K562 (cell line): ENCODE measurements at regions of chr2 and their contacts with region 1.

Region 1: DNA sequence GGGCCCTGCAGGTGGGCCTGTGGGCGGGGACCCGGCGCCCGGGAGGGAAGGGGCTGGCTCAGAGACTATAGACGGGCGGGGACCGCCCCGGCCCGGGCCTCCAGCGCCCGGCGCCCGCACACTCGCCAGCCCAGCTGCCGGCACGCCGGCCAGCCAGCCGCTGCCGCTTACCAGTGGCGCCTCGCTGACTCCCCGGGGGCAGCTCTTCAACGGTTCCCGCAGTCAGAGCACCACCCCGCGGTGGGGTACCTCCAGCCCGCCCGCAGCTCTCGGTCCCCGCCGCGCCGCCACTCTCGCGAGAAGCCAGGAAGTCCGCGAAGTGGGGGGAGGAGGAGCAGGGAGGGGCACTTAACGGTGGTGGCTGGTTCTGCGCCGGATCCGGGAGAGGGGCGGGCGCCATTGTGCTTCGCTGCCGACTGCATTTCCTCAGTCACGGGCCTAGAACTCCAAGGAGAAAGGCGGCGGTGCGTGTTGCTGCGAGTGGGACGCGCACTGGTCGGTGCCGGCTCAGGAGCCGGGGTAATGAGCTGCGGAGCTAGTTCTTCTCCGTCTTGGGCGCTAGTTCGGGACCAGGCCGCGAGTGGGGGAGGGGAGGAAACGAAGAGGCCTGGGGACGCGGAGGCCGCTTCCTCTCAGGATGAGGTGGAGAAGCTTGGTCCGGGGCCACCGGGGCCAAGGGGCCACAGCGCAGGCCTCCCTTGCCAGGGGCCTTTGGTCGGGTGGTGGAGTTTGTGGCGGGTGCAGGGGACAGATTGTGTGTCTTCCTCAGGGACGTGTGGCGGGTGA is at the start of gene MARCHF7:
- DNase-seq: peak; percentile 97
- ATAC-seq: peak; percentile 94
- H3K4me3 ChIP-seq: peak within 1 kb of the TSS; percentile 88
- H3K27ac ChIP-seq: peak within 1 kb of the TSS; percentile 99
- H3K4me1 ChIP-seq: peaks cover 11 to 17% of the 10 kb centered on the region in 2 experiments; a peak in 4 of 5 replicates
- H3K27me3 ChIP-seq: no peaks in the 10 kb centered on the region; a peak in 1 of 5 replicates
- CTCF ChIP-seq: peak; percentile 78 to 89 (median 86)
- EP300 ChIP-seq: peak; percentile 5; the same call in 1 of the 2 replicates
- POLR2A ChIP-seq: peak; percentile 99
- RAD21 ChIP-seq: peak; percentile 88 to 96
- polyA plus RNA-seq, gene MARCHF7: 86.7 to 106 TPM

Region 2: DNA sequence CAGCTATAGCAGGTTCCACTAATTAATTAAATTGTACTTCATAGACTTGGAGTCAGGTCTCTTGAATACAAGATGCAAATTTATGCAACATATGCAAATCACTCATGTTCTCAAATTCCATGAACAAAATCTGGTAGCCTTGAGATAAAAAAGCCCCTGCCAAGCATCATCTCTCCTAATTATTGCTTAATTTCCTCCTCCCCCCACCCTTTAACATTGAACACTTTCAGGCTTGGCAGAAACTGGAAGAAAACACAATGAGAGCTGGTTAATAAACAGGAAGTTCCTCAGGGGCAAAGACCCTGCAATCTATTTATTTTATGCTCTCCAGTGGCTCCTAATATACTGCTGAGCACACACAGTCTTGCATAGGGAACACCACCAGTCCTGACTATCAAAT is 1800.6 kb before region 1 on chr2:
- CTCF ChIA-PET with region 1: no interaction called
- POLR2A ChIA-PET with region 1: no interaction called
- in situ Hi-C with region 1: no loop called
- intact Hi-C with region 1: no loop called
- DNase-seq: no peak
- ATAC-seq: no peak
- H3K4me3 ChIP-seq: no peak overlapping the region
- H3K27ac ChIP-seq: no peak overlapping the region
- H3K4me1 ChIP-seq: peaks cover 0 to 15% of the 10 kb centered on the region in 2 experiments; a peak in 3 of 5 replicates
- H3K27me3 ChIP-seq: no peaks in the 10 kb centered on the region
- CTCF ChIP-seq: no peak
- EP300 ChIP-seq: no peak
- POLR2A ChIP-seq: no peak
- RAD21 ChIP-seq: no peak

Region 3: DNA sequence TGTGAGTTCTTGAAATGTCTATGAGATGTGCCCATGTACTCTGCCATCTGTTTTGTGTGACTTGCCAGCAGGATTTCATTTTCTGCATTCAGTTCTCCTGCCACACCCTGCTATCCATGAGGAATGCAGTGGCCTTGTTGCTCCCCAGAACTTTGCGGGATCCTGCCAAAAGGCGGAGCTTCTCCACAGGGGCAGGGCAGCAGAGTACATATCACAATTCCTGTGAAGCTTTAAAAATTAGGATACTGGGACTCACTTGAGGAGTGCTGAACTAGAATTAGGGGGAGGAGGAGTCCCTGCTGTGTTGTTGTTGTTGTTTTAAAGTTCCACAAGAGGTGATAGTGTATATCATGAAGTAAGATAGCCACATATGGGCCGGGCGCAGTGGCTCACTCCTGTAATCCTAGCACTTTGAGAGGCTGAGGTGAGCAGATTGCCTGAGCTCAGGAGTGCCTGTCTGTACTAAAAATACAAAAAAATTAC is 667.5 kb before region 1 on chr2:
- CTCF ChIA-PET with region 1: no interaction called
- POLR2A ChIA-PET with region 1: no interaction called
- in situ Hi-C with region 1: no loop called
- intact Hi-C with region 1: no loop called
- DNase-seq: no peak
- ATAC-seq: no peak
- H3K4me3 ChIP-seq: no peak overlapping the region
- H3K27ac ChIP-seq: no peak overlapping the region
- H3K4me1 ChIP-seq: no peaks in the 10 kb centered on the region
- H3K27me3 ChIP-seq: peaks cover 18 to 47% of the 10 kb centered on the region in 2 experiments; a peak in 4 of 5 replicates
- CTCF ChIP-seq: no peak
- EP300 ChIP-seq: no peak
- POLR2A ChIP-seq: no peak
- RAD21 ChIP-seq: no peak

Region 4: DNA sequence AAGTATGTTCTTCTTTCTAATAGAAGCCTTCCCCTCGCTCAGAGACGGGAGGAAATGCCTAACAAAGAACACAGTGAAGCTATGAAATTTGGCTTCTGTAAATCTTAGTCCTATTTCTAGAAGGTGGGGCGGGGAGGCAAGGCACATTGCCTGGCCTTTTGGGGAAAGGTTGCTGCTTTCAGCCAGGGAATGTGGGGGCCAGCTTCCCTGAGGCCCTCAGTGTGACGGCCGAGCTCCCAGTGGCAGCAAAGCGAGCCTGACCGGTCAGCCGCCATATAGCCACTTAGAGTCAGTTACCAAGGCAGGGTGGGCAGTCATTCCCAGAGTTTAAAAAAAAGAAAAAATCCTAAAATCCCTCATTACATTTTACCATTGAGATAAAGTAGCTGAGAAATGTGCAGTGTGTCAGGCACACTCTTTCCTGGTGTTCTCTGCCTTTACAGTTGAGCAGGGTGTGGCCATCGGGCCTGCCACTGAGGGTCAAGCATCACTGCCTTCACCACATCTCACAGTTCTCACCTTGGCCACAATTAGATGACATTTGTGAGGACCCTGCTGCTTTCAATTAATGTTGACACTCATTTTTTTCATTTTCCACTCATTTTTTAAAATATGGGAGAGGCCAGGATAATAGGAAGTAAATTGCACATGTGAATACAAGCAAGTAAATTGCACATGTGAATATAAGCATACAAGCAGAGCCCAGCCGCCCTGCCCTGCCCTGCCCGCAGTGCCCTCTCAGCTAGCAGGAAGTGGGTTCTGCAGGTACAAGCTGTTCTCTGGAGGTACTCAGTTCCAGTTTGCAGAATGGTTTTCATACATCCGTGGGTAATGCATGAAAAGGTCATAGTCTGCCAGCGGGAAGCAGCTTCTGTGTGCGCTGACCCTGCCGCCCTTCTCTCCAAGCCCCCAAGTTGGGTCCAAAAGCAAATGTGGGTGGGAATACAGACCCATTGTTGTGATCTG is 502.7 kb before region 1 on chr2:
- CTCF ChIA-PET with region 1: no interaction called
- POLR2A ChIA-PET with region 1: no interaction called
- in situ Hi-C with region 1: no loop called
- intact Hi-C with region 1: loop called (anchors 2 kb)
- DNase-seq: no peak
- ATAC-seq: no peak
- H3K4me3 ChIP-seq: no peak overlapping the region
- H3K27ac ChIP-seq: no peak overlapping the region
- H3K4me1 ChIP-seq: no peaks in the 10 kb centered on the region
- H3K27me3 ChIP-seq: peaks cover 34 to 60% of the 10 kb centered on the region in 2 experiments
- CTCF ChIP-seq: no peak
- EP300 ChIP-seq: no peak
- POLR2A ChIP-seq: no peak
- RAD21 ChIP-seq: no peak

Region 5: GRCh38 chr2:159445307-159445706 is 267.0 kb before region 1 on chr2:
- CTCF ChIA-PET with region 1: no interaction called
- POLR2A ChIA-PET with region 1: interaction called, 3 read pairs
- in situ Hi-C with region 1: no loop called
- intact Hi-C with region 1: loop called (anchors 5 kb)
- DNase-seq: no peak
- ATAC-seq: no peak
- H3K4me3 ChIP-seq: no peak overlapping the region
- H3K27ac ChIP-seq: no peak overlapping the region
- H3K4me1 ChIP-seq: peaks cover 0 to 5% of the 10 kb centered on the region in 2 experiments; a peak in 1 of 5 replicates
- H3K27me3 ChIP-seq: no peaks in the 10 kb centered on the region
- CTCF ChIP-seq: no peak
- EP300 ChIP-seq: no peak
- POLR2A ChIP-seq: no peak
- RAD21 ChIP-seq: no peak

Region 6: DNA sequence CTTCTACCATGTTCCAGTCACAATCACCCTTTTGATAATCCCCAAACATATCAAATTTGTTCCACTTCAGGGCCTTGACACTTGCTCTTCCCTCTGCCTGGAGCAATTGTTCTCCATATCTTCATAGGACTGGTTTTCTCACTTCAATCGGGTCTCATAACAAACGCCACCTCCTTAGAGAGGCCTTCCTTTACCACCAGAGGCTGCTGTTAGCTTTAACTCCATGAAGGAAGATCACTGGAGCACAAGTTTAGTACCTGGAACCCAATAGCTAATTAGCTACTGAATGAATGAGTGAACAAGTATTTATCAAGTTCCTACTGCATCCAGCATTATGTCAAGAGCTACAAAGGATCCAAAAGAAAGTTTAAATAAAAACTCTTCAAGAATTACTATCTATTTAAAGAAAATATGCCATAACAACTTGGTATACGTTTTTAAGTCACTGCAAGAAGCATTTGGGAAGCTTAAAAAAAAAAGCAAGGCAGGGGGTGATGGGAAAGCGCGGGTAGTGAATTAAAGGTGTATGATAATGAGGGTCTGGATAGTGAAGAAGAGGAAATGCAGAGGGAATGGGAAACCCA is 154.8 kb before region 1 on chr2:
- CTCF ChIA-PET with region 1: interaction called, 5 read pairs
- POLR2A ChIA-PET with region 1: no interaction called
- in situ Hi-C with region 1: no loop called
- intact Hi-C with region 1: loop called (anchors 1 kb)
- DNase-seq: peak in 1 of 4 experiments; percentile 39
- ATAC-seq: peak; percentile 85
- H3K4me3 ChIP-seq: no peak overlapping the region
- H3K27ac ChIP-seq: no peak overlapping the region
- H3K4me1 ChIP-seq: peaks cover 0 to 6% of the 10 kb centered on the region in 2 experiments; a peak in 1 of 5 replicates
- H3K27me3 ChIP-seq: no peaks in the 10 kb centered on the region
- CTCF ChIP-seq: peak; percentile 47 to 63 (median 56); a peak in 5 of 6 replicates
- EP300 ChIP-seq: no peak
- POLR2A ChIP-seq: no peak
- RAD21 ChIP-seq: peak; percentile 31 to 79

Region 7: DNA sequence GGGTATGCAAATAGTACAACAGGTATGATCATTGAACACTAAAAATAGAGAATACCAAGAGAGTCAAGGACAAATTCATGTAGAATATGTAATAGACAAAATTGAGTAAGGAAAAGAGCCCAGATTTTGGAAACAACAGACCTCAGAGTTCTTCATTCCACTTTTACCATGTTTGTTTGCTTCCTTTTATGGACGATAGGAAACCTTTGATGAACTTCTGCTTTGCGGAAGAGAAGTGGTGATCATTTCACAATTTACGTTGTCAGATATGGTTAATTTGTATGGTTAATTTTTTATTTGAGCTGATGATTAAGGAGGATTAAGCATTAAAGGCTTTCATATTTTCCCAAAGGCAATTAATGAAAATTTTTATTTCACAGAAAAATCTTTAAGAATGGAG is 16.3 kb after region 1 on chr2:
- CTCF ChIA-PET with region 1: no interaction called
- POLR2A ChIA-PET with region 1: interaction called, 19 read pairs
- in situ Hi-C with region 1: no loop called
- intact Hi-C with region 1: no loop called
- DNase-seq: no peak
- ATAC-seq: no peak
- H3K4me3 ChIP-seq: no peak overlapping the region
- H3K27ac ChIP-seq: no peak overlapping the region
- H3K4me1 ChIP-seq: no peaks in the 10 kb centered on the region
- H3K27me3 ChIP-seq: no peaks in the 10 kb centered on the region
- CTCF ChIP-seq: no peak
- EP300 ChIP-seq: no peak
- POLR2A ChIP-seq: no peak
- RAD21 ChIP-seq: no peak

Region 8: GRCh38 chr2:159807183-159808031 is 95.1 kb after region 1 on chr2:
- CTCF ChIA-PET with region 1: no interaction called
- POLR2A ChIA-PET with region 1: no interaction called
- in situ Hi-C with region 1: no loop called
- intact Hi-C with region 1: loop called (anchors 5 kb)
- DNase-seq: peak; percentile 66 to 75 (median 69)
- ATAC-seq: peak; percentile 94
- H3K4me3 ChIP-seq: no peak overlapping the region
- H3K27ac ChIP-seq: no peak overlapping the region
- H3K4me1 ChIP-seq: no peaks in the 10 kb centered on the region
- H3K27me3 ChIP-seq: peaks cover 4 to 6% of the 10 kb centered on the region in 2 experiments; a peak in 2 of 5 replicates
- CTCF ChIP-seq: peak; percentile 82 to 93 (median 89)
- EP300 ChIP-seq: no peak
- POLR2A ChIP-seq: no peak
- RAD21 ChIP-seq: peak; percentile 71 to 85